Mucosa of descending colon (tissue), 3 donors: ENCODE measurements at regions of chr22 and their contacts with region 1.

Region 1: DNA sequence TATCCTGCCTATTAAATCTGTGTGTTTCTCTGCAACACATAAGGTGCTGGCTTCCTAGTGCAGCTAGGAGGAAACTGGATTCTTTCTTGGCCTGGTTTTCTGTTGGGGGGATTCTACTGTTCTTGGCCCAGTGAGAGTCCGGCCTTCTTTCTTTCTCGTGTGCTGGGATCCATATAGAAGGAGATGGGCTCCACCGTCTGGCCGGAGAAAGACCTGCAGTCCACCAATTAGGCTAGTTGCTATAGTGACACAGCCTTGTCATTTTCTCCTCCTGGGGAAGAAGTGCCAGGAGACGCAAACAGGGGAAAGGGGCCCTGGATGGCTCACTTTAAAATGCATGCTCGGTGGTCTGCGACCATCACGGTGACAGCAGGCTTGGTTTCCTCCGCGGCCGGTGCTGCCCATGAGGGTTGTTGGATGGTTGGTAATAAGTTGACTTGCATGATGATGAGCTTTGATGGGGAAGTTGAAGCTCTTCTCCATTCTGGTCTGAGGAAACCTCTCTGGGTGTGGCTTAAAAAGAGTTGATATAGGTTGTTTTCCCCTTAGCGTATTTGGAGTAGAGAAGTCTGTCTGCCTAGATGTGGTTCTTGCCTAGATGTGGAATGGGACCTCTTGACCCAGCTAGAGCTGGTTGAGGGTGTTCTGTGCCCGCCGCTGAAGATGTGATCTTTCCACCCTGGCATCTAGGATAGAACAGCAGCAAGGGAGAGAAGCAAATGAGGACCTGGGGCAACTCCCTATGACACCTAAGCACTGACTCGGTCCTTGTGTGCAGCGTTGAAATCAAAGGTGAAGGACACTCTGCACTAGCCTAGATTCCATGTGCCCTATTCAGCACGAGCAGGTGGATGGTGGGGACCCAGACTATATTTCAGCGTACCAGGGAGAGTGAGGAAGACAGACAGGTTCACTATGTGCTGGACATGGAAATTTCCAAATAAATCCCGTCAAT is 1335.0 kb downstream of the BRD1 start:
- DNase-seq: peak in 2 of 3 donors; percentile 71 to 77
- ATAC-seq: peak; percentile 72
- H3K4me3 ChIP-seq: no peak overlapping the region
- H3K4me1 ChIP-seq: no peaks in the 10 kb centered on the region
- CTCF ChIP-seq: peak; percentile 51

Region 2: GRCh38 chr22:46798366-46799350 is 1694.0 kb before region 1 on chr22:
- intact Hi-C with region 1: loop called in 1 of 2 experiments (anchors 5 kb)
- DNase-seq: peak; percentile 73 to 92 (median 90)
- ATAC-seq: peak; percentile 94
- H3K4me3 ChIP-seq: no peak overlapping the region
- H3K4me1 ChIP-seq: peaks cover 4% of the 10 kb centered on the region
- CTCF ChIP-seq: peak; percentile 92